PC-9 (cell line): ENCODE measurements at regions of chr7 and their contacts with region 1.

Region 1: GRCh38 chr7:26792576-26792975 is 71.8 kb downstream of the SKAP2 start:
- DNase-seq: no peak
- H3K4me3 ChIP-seq: no peak overlapping the region
- H3K27ac ChIP-seq: no peak overlapping the region
- H3K4me1 ChIP-seq: no peaks in the 10 kb centered on the region
- H3K27me3 ChIP-seq: no peaks in the 10 kb centered on the region
- CTCF ChIP-seq: no peak

Region 2: GRCh38 chr7:26329520-26330255 is 462.9 kb before region 1 on chr7:
- CTCF ChIA-PET with region 1: no interaction called
- POLR2A ChIA-PET with region 1: no interaction called
- intact Hi-C with region 1: no loop called
- DNase-seq: no peak
- H3K4me3 ChIP-seq: no peak overlapping the region
- H3K27ac ChIP-seq: no peak overlapping the region
- H3K4me1 ChIP-seq: no peaks in the 10 kb centered on the region
- H3K27me3 ChIP-seq: no peaks in the 10 kb centered on the region
- CTCF ChIP-seq: no peak

Region 3: GRCh38 chr7:26760501-26760900 is 32.1 kb before region 1 on chr7:
- CTCF ChIA-PET with region 1: no interaction called
- POLR2A ChIA-PET with region 1: no interaction called
- intact Hi-C with region 1: loop called (anchors 5 kb)
- DNase-seq: no peak
- H3K4me3 ChIP-seq: no peak overlapping the region
- H3K27ac ChIP-seq: no peak overlapping the region
- H3K4me1 ChIP-seq: no peaks in the 10 kb centered on the region
- H3K27me3 ChIP-seq: no peaks in the 10 kb centered on the region
- CTCF ChIP-seq: no peak